ENCODE measurements at regions of chr13 and their contacts with region 1.

Region 1: DNA sequence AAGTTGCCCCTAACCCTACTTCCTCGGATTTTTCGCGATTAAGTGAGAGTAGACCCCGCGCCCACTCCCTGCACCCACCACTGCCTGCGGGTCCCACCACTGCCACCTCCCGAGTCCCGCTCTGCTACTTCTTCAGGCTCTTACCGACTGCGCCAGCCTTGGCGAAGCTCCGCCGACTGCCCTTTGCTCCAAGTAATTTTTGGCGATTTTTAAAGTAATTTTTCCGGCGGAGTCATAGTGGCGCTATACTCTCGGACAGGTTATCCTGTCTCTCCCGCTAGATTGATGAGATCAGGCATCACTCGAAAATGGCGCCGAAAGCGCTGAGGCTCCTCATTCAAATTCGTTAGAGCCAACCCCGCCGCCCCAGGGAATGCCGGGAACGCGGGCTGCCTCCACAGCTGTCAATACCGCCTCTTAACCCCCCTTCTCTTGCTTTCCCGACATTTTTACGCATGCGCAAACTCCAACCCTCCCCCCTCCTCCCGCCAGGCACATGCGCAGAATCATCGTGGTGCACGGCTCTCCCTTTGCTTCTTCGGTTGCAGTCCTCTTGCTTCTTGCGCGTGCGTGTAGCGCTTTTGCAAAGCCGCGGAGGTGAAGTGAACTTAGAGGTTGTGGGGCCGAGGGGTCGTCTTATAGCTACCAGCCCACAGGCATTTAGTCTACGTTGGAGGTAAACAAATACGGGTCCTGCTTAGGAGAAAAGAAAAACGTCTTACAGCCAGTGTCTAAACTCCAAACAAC is 66.6 kb downstream of the KCNRG start:
- DNase-seq: peak; percentile 99
- H3K4me3 Mint-ChIP-seq: peak overlapping the region; percentile 97
- H3K27ac Mint-ChIP-seq: peak overlapping the region; percentile 99
- H3K4me1 Mint-ChIP-seq: peaks cover 11% of the 10 kb centered on the region
- H3K27me3 Mint-ChIP-seq: no peaks in the 10 kb centered on the region
- CTCF ChIP-seq: no peak

Region 2: GRCh38 chr13:49996951-49997895 is 84.6 kb before region 1 on chr13 and contains the start of gene TRIM13:
- CTCF ChIA-PET with region 1: interaction called, 8 read pairs
- POLR2A ChIA-PET with region 1: interaction called, 201 read pairs
- intact Hi-C with region 1: loop called (anchors 1 kb)
- DNase-seq: peak; percentile 91
- H3K4me3 Mint-ChIP-seq: peak within 1 kb of the TSS; percentile 89
- H3K27ac Mint-ChIP-seq: peak within 1 kb of the TSS; percentile 80
- H3K4me1 Mint-ChIP-seq: peaks cover 16% of the 10 kb centered on the region
- H3K27me3 Mint-ChIP-seq: no peaks in the 10 kb centered on the region
- CTCF ChIP-seq: peak; percentile 79
- total RNA-seq, gene TRIM13: 17.5 and 19.0 TPM in 2 replicates

Region 3: GRCh38 chr13:50069261-50069660 is 12.6 kb before region 1 on chr13:
- CTCF ChIA-PET with region 1: interaction called, 15 read pairs
- POLR2A ChIA-PET with region 1: interaction called, 362 read pairs
- intact Hi-C with region 1: loop called (anchors 1 kb)
- DNase-seq: peak; percentile 42
- H3K4me3 Mint-ChIP-seq: peak overlapping the region; percentile 33
- H3K27ac Mint-ChIP-seq: peak overlapping the region; percentile 81
- H3K4me1 Mint-ChIP-seq: peaks cover 31% of the 10 kb centered on the region
- H3K27me3 Mint-ChIP-seq: no peaks in the 10 kb centered on the region
- CTCF ChIP-seq: no peak

Region 4: GRCh38 chr13:50170447-50171037 is 88.7 kb after region 1 on chr13:
- CTCF ChIA-PET with region 1: interaction called, 5 read pairs
- POLR2A ChIA-PET with region 1: no interaction called
- intact Hi-C with region 1: loop called (anchors 10 kb)
- DNase-seq: peak; percentile 42
- H3K4me3 Mint-ChIP-seq: no peak overlapping the region
- H3K27ac Mint-ChIP-seq: no peak overlapping the region
- H3K4me1 Mint-ChIP-seq: no peaks in the 10 kb centered on the region
- H3K27me3 Mint-ChIP-seq: no peaks in the 10 kb centered on the region
- CTCF ChIP-seq: peak; percentile 36

Region 5: GRCh38 chr13:50801087-50801931 is 719.5 kb after region 1 on chr13:
- CTCF ChIA-PET with region 1: interaction called, 20 read pairs
- POLR2A ChIA-PET with region 1: interaction called, 4 read pairs
- intact Hi-C with region 1: loop called (anchors 1 kb)
- DNase-seq: peak; percentile 82
- H3K4me3 Mint-ChIP-seq: no peak overlapping the region
- H3K27ac Mint-ChIP-seq: no peak overlapping the region
- H3K4me1 Mint-ChIP-seq: peaks cover 5% of the 10 kb centered on the region
- H3K27me3 Mint-ChIP-seq: no peaks in the 10 kb centered on the region
- CTCF ChIP-seq: peak; percentile 85

Measured in MCF 10A (cell line).